PC-3 (cell line): ENCODE measurements at regions of chr12 and their contacts with region 1.

Region 1: GRCh38 chr12:114662512-114663177 is 21.3 kb downstream of the TBX3 start:
- DNase-seq: peak; percentile 98
- ATAC-seq: peak; percentile 44
- H3K4me3 ChIP-seq: no peak overlapping the region
- H3K27ac ChIP-seq: peak overlapping the region; percentile 75
- H3K4me1 ChIP-seq: peaks cover 47% of the 10 kb centered on the region
- H3K27me3 ChIP-seq: no peaks in the 10 kb centered on the region
- CTCF ChIP-seq: peak; percentile 96

Region 2: GRCh38 chr12:112837629-112838197 is 1824.9 kb before region 1 on chr12:
- CTCF ChIA-PET with region 1: no interaction called
- POLR2A ChIA-PET with region 1: no interaction called
- intact Hi-C with region 1: loop called (anchors 10 kb)
- DNase-seq: peak; percentile 91
- ATAC-seq: peak; percentile 23
- H3K4me3 ChIP-seq: no peak overlapping the region
- H3K27ac ChIP-seq: peak overlapping the region; percentile 97
- H3K4me1 ChIP-seq: peaks cover 50% of the 10 kb centered on the region
- H3K27me3 ChIP-seq: no peaks in the 10 kb centered on the region
- CTCF ChIP-seq: no peak

Region 3: GRCh38 chr12:114625294-114625851 is 37.3 kb before region 1 on chr12:
- CTCF ChIA-PET with region 1: interaction called, 4 read pairs
- POLR2A ChIA-PET with region 1: no interaction called
- intact Hi-C with region 1: loop called (anchors 1 kb)
- DNase-seq: peak; percentile 74
- ATAC-seq: peak; percentile 96
- H3K4me3 ChIP-seq: no peak overlapping the region
- H3K27ac ChIP-seq: no peak overlapping the region
- H3K4me1 ChIP-seq: no peaks in the 10 kb centered on the region
- H3K27me3 ChIP-seq: peaks cover 19% of the 10 kb centered on the region; the same call in 1 of the 2 replicates
- CTCF ChIP-seq: peak; percentile 98

Region 4: GRCh38 chr12:115013236-115013981 is 350.8 kb after region 1 on chr12:
- CTCF ChIA-PET with region 1: no interaction called
- POLR2A ChIA-PET with region 1: no interaction called
- intact Hi-C with region 1: no loop called
- DNase-seq: no peak
- ATAC-seq: no peak
- H3K4me3 ChIP-seq: no peak overlapping the region
- H3K27ac ChIP-seq: no peak overlapping the region
- H3K4me1 ChIP-seq: peaks cover 31% of the 10 kb centered on the region
- H3K27me3 ChIP-seq: no peaks in the 10 kb centered on the region
- CTCF ChIP-seq: no peak

Region 5: GRCh38 chr12:115398311-115398781 is 735.7 kb after region 1 on chr12:
- CTCF ChIA-PET with region 1: interaction called, 9 read pairs
- POLR2A ChIA-PET with region 1: no interaction called
- intact Hi-C with region 1: loop called (anchors 1 kb)
- DNase-seq: peak; percentile 86
- ATAC-seq: peak; percentile 97
- H3K4me3 ChIP-seq: no peak overlapping the region
- H3K27ac ChIP-seq: no peak overlapping the region
- H3K4me1 ChIP-seq: peaks cover 22% of the 10 kb centered on the region; the same call in 1 of the 2 replicates
- H3K27me3 ChIP-seq: no peaks in the 10 kb centered on the region
- CTCF ChIP-seq: peak; percentile 96

Region 6: GRCh38 chr12:115632308-115632707 is 969.7 kb after region 1 on chr12:
- CTCF ChIA-PET with region 1: no interaction called
- POLR2A ChIA-PET with region 1: no interaction called
- intact Hi-C with region 1: loop called (anchors 1 kb)
- DNase-seq: peak; percentile 67
- ATAC-seq: peak; percentile 55; the same call in 1 of the 2 replicates
- H3K4me3 ChIP-seq: no peak overlapping the region
- H3K27ac ChIP-seq: no peak overlapping the region
- H3K4me1 ChIP-seq: no peaks in the 10 kb centered on the region
- H3K27me3 ChIP-seq: no peaks in the 10 kb centered on the region
- CTCF ChIP-seq: peak; percentile 78